Natural killer cell (primary cell): ENCODE measurements at regions of chr20 and their contacts with region 1.

Region 1: DNA sequence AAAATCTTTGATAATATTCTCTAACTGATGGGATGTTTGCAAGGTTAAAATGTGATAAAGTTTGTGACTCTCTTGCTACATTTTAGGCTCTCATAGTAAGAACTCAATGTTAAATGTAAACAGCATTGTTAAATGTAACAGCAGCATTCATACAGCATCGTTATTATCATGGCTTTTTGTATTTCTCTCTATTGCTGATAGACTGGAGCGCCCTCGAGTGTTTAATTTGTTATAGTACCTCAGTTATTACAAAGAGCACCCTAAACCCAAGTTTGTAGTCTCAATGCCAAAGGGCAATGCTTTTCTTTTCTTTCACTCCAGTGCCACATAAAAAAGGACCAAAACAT is 14.9 kb upstream of the TTPAL start:
- DNase-seq: peak in 1 of 2 donors; percentile 45
- ATAC-seq: peak in 2 of 3 donors; percentile 29 to 34
- H3K4me3 ChIP-seq: no peak overlapping the region
- H3K4me3 Mint-ChIP-seq: no peak overlapping the region
- H3K27ac ChIP-seq: no peak overlapping the region
- H3K27ac Mint-ChIP-seq: no peak overlapping the region
- H3K4me1 ChIP-seq: no peaks in the 10 kb centered on the region
- H3K4me1 Mint-ChIP-seq: no peaks in the 10 kb centered on the region
- H3K27me3 ChIP-seq: no peaks in the 10 kb centered on the region
- H3K27me3 Mint-ChIP-seq: no peaks in the 10 kb centered on the region
- CTCF ChIP-seq: peak; percentile 13

Region 2: GRCh38 chr20:44210422-44211176 is 250.2 kb before region 1 on chr20 and contains the start of gene OSER1:
- intact Hi-C with region 1: loop called (anchors 10 kb)
- DNase-seq: peak; percentile 98 to 99
- ATAC-seq: peak; percentile 81 to 96 (median 84)
- H3K4me3 ChIP-seq: peak within 1 kb of the TSS; percentile 81
- H3K4me3 Mint-ChIP-seq: peak within 1 kb of the TSS; percentile 98
- H3K27ac ChIP-seq: peak within 1 kb of the TSS; percentile 89
- H3K27ac Mint-ChIP-seq: peak within 1 kb of the TSS; percentile 92 to 97
- H3K4me1 ChIP-seq: peaks cover 25% of the 10 kb centered on the region
- H3K4me1 Mint-ChIP-seq: peaks cover 52 to 56% of the 10 kb centered on the region in 2 donors
- H3K27me3 ChIP-seq: no peaks in the 10 kb centered on the region
- H3K27me3 Mint-ChIP-seq: no peaks in the 10 kb centered on the region
- CTCF ChIP-seq: no peak
- total RNA-seq, gene OSER1: 72.3 to 93.9 (median 78.3) TPM

Region 3: GRCh38 chr20:44532259-44532980 is 71.7 kb after region 1 on chr20:
- intact Hi-C with region 1: no loop called
- DNase-seq: no peak
- ATAC-seq: peak in 1 of 3 donors; percentile 11
- H3K4me3 ChIP-seq: peak overlapping the region; percentile 59
- H3K4me3 Mint-ChIP-seq: no peak overlapping the region
- H3K27ac ChIP-seq: no peak overlapping the region
- H3K27ac Mint-ChIP-seq: no peak overlapping the region
- H3K4me1 ChIP-seq: peaks cover 16% of the 10 kb centered on the region
- H3K4me1 Mint-ChIP-seq: no peaks in the 10 kb centered on the region
- H3K27me3 ChIP-seq: no peaks in the 10 kb centered on the region
- H3K27me3 Mint-ChIP-seq: peaks cover 4 to 6% of the 10 kb centered on the region in 2 donors
- CTCF ChIP-seq: no peak